ENCODE measurements at regions of chr20 and their contacts with region 1.

Region 1: GRCh38 chr20:45436732-45437391 is 20.9 kb downstream of the PIGT start:
- DNase-seq: peak; percentile 94
- ATAC-seq: peak; percentile 96

Region 2: DNA sequence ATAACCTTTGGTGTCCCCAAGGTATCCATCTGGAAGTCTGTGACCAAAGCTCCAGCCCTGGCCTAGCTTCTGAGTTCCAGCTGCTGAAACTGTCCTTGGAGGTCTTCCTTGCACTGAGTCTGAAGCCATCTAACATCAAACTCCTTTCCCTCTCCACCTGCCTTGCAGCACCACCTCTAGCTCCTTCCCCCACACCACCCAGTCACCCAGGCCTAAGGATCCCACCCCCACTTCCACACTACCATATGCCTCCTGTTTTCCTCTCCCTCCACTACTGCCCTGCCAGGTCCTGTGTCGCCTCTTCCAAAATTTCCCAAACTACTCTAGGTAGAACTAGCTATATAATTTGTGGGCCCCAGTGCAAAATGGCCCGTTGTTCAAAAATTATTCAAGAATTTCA is 117.9 kb before region 1 on chr20:
- intact Hi-C with region 1: loop called (anchors 2 kb)
- DNase-seq: no peak
- ATAC-seq: no peak

Region 3: GRCh38 chr20:45373353-45374100 is 63.3 kb before region 1 on chr20:
- intact Hi-C with region 1: loop called (anchors 2 kb)
- DNase-seq: peak; percentile 92
- ATAC-seq: peak; percentile 93